Dorsolateral prefrontal cortex (tissue), 120 donors: ENCODE measurements at regions of chr10 and their contacts with region 1.

Region 1: DNA sequence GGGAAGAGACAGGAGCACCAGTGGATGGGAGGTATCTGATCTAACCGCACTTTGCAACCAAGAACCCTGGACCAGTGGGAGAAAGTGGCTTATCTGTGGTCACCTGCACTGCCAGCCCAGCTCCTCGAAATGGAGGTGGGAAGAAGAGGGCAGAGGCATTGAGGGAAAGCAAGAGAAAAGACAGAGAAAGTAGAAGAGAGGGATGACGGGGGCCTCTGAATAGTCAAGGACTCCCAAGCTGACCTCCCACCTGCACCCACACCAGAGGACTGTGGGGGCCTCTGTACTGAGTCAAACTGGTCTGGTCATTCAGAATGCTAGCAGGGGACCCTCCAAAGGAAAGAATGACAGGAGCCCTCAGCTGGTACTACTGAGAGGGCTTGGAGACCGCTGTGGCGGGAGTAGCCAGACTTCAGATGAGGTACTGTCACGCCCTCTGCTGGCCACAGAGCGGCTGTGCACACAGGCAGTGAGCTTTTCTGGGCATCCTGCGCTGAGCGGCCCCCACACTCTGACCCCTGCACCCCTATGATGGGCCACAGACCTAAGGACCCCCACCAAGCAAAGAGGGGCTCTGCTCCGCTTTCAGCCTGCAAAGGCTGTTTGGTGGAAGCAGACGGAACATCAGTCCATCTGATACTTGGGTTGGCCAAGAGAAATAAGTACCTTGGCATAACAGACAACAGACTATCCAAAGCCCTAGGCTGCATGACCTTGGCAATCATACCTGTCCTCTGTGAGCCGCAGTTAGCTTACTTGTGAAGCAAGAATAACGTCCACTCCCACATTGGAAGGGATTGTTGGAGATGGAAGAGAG is 112.9 kb downstream of the COL13A1 start:
- DNase-seq: peak; percentile 66 to 87 (median 76)
- H3K4me3 ChIP-seq: no peak overlapping the region
- H3K27ac ChIP-seq: no peak overlapping the region
- H3K27me3 ChIP-seq: peaks cover 0 to 9% (median 0%) of the 10 kb centered on the region in 45 donors
- CTCF ChIP-seq: peak; percentile 85 to 99 (median 96)

Region 2: DNA sequence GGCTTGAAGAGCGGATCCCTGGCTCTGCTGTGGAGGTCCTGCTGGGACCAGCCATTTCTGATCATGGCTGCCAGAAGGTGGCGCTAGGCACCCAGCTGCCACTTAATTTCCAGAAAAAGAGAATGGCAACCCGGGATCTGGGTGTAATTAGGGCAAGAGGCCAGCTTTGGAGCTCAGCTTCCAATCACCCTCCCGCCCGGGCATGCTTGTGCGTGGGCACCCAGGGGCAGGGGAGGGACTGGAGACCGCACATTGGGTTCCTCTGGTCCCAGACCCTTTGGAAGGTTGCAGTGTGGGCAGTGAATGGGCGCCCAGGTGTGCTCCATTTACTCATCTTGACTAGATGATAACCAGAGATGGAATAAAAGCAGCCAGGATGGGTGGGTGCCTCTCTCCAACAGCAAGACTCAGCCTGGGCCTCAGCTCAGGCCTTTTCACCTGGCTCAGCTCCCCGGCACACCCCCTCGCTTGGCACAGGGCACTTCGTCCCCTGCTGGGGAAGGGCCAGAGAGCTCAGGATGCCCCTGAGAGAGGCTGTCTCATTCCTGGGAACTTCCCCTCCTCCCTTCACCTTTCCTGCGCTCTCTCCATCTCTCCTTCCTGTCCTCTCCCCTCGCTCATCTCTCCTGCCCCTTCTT is 269.8 kb before region 1 on chr10:
- intact Hi-C with region 1: loop called (anchors 2 to 5 kb)
- DNase-seq: peak in 8 of 10 donors; percentile 49 to 78 (median 70)
- H3K4me3 ChIP-seq: peak overlapping the region in 7 of 59 donors; percentile 0 to 25 (median 15)
- H3K27ac ChIP-seq: peak overlapping the region in 31 of 59 donors; percentile 2 to 85 (median 55)
- H3K27me3 ChIP-seq: peaks cover 0 to 4% (median 0%) of the 10 kb centered on the region in 45 donors
- CTCF ChIP-seq: peak; percentile 59 to 91 (median 84)

Region 3: DNA sequence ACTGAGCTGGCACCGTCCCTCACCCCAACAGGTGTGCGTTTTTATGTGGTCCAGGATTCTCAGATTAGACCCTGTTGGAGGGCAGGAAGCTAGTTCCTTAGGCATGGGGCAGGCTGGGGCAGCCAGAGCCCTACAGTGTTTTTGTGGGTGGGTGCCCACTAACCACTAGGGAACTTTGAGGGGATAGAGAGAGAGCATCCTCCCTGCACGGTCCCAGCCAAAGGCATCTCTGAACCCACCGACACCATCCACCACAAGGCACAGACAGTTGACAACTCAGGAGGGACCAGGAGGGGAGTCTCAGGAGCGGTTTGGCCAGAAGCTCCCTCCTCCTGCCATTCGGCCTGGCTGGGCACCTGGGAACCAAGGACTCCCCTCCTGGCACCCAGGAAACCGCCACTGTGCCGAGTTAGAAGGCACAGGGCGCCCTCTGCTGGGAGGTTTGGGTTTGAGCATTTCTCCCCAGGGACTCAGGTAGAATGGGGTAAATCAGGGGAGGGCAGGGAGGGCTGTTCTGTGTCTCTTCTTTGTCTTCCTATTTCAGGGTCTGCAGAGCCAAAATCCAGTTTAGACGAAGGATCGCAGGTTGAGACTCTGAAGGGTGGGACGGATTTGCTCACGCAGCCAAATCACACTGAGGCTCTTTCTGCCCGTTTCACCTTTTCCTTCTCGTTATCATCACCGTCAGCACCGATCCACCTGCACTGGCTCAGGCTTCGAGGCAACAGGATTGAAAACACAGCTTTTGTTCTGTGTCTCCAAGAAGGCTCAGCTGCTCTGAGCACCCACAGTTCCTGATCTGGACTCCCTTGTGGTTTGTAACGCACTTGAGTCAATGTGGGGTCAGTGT is 197.7 kb before region 1 on chr10:
- intact Hi-C with region 1: no loop called
- DNase-seq: peak in 7 of 10 donors; percentile 35 to 65 (median 55)
- H3K4me3 ChIP-seq: no peak overlapping the region
- H3K27ac ChIP-seq: no peak overlapping the region
- H3K27me3 ChIP-seq: peaks cover 0 to 6% (median 0%) of the 10 kb centered on the region in 45 donors
- CTCF ChIP-seq: peak in 55 of 56 donors; percentile 42 to 78 (median 63)

Region 4: GRCh38 chr10:69786791-69787190 is 127.8 kb before region 1 on chr10:
- intact Hi-C with region 1: loop called (anchors 5 kb)
- DNase-seq: no peak
- H3K4me3 ChIP-seq: no peak overlapping the region
- H3K27ac ChIP-seq: no peak overlapping the region
- H3K27me3 ChIP-seq: peaks cover 0 to 12% (median 0%) of the 10 kb centered on the region in 45 donors
- CTCF ChIP-seq: peak in 31 of 56 donors; percentile 10 to 47 (median 23)

Region 5: DNA sequence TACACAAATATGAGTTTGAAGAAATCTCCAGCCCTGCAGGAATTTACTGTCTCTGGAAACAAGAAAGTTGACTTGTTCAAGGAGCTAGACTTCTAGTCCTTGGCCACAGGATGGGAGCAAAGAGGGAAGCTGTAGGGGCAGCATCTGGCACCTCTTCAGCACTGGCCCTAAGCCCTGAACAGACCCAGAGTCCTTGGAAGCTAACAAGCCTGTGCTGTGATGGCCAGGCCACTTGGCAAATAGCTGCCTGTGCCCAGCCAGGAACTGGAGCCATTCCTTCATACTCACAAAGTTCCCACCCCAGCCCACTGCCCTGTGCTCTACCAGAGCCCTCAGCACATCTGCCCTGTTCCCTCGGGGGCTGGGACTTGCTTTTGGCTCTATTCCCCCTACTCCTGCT is 122.3 kb before region 1 on chr10:
- intact Hi-C with region 1: loop called (anchors 5 kb)
- DNase-seq: peak in 2 of 10 donors; percentile 10 to 62
- H3K4me3 ChIP-seq: no peak overlapping the region
- H3K27ac ChIP-seq: no peak overlapping the region
- H3K27me3 ChIP-seq: peaks cover 0 to 3% (median 0%) of the 10 kb centered on the region in 45 donors
- CTCF ChIP-seq: no peak